Caco-2 (cell line): ENCODE measurements at regions of chr12 and their contacts with region 1.

Region 1: GRCh38 chr12:81128930-81129554 is 51.2 kb downstream of the ACSS3 start:
- DNase-seq: peak; percentile 48 to 58
- H3K4me3 ChIP-seq: no peak overlapping the region
- H3K4me3 Mint-ChIP-seq: no peak overlapping the region
- H3K27ac Mint-ChIP-seq: no peak overlapping the region
- H3K4me1 ChIP-seq: no peaks in the 10 kb centered on the region
- H3K4me1 Mint-ChIP-seq: no peaks in the 10 kb centered on the region
- H3K27me3 ChIP-seq: no peaks in the 10 kb centered on the region
- H3K27me3 Mint-ChIP-seq: no peaks in the 10 kb centered on the region
- CTCF ChIP-seq: peak; percentile 79 to 87

Region 2: DNA sequence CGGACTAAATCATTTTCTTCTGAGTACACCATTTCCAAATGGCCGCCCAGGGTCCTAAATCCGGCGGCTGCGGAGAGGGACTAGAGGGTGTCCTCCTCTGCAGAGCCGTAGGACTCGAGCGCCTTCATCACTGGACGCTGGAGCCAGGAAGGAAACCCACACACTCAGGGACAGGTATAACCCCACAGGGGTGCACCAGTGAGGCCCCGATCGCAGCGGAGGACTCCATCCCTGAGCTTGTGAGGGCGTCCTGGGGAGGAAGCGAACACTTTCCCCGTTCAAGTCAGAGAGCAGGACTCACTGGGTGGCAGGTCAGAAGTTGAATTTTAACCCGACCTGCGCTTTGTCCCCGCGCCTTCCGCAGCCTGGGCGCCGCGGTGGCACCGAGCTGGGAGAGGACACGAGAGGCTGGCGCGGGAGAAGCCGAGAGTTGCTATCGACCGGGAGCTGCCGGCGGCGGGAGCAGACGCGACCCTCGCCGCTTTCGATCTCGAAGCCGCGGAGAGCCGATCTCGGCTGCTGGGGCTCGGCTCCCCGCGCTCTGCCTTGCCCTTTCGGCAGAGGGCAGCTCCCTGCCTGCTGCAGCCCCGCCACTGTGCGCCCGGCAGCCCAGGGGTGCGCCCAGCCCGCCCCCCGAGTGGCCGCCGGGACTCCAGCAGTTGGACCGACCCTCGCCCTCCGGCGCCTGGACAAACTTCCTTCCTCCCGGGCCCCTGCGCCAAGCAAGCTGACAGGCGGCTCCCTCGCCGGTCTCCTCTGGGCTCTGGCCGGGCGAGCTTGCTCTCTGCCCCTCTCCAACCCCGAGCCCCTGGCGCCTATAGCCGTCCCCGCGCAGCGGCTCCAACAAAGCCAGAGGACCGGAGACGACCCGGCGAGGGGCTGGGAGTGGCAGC is 192.3 kb before region 1 on chr12:
- CTCF ChIA-PET with region 1: interaction called, 3 read pairs
- POLR2A ChIA-PET with region 1: no interaction called
- intact Hi-C with region 1: loop called (anchors 2 kb)
- DNase-seq: peak; percentile 42 to 58
- H3K4me3 ChIP-seq: peak overlapping the region; percentile 84
- H3K4me3 Mint-ChIP-seq: peak overlapping the region; percentile 86
- H3K27ac Mint-ChIP-seq: peak overlapping the region; percentile 69
- H3K4me1 ChIP-seq: no peaks in the 10 kb centered on the region
- H3K4me1 Mint-ChIP-seq: peaks cover 7% of the 10 kb centered on the region
- H3K27me3 ChIP-seq: no peaks in the 10 kb centered on the region
- H3K27me3 Mint-ChIP-seq: peaks cover 2% of the 10 kb centered on the region
- CTCF ChIP-seq: peak in 1 of 2 experiments; percentile 3

Region 3: DNA sequence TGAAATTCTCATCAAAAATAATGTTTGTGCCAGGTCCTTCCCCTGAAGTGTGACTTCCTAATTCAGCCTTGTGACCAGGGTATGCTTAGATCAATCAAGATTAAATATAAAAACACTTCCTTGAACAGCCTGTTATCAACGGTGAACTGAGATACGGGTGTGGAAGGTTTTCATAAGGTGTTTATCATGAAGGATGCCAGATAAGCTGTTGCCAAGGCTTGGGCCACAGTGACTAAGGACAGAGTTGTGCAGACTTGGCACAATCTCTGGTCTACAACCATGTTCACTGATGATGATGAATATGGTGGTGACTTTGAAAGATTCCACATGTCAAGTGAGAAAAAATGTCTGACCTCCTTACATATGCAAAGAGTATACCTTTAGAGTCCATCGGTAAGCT is 140.1 kb before region 1 on chr12:
- CTCF ChIA-PET with region 1: no interaction called
- POLR2A ChIA-PET with region 1: no interaction called
- intact Hi-C with region 1: loop called (anchors 5 kb)
- DNase-seq: no peak
- H3K4me3 ChIP-seq: no peak overlapping the region
- H3K4me3 Mint-ChIP-seq: no peak overlapping the region
- H3K27ac Mint-ChIP-seq: no peak overlapping the region
- H3K4me1 ChIP-seq: no peaks in the 10 kb centered on the region
- H3K4me1 Mint-ChIP-seq: no peaks in the 10 kb centered on the region
- H3K27me3 ChIP-seq: no peaks in the 10 kb centered on the region
- H3K27me3 Mint-ChIP-seq: peaks cover 3% of the 10 kb centered on the region
- CTCF ChIP-seq: no peak

Region 4: GRCh38 chr12:81005606-81006005 is 123.4 kb before region 1 on chr12:
- CTCF ChIA-PET with region 1: no interaction called
- POLR2A ChIA-PET with region 1: no interaction called
- intact Hi-C with region 1: no loop called
- DNase-seq: no peak
- H3K4me3 ChIP-seq: no peak overlapping the region
- H3K4me3 Mint-ChIP-seq: no peak overlapping the region
- H3K27ac Mint-ChIP-seq: no peak overlapping the region
- H3K4me1 ChIP-seq: no peaks in the 10 kb centered on the region
- H3K4me1 Mint-ChIP-seq: no peaks in the 10 kb centered on the region
- H3K27me3 ChIP-seq: no peaks in the 10 kb centered on the region
- H3K27me3 Mint-ChIP-seq: no peaks in the 10 kb centered on the region
- CTCF ChIP-seq: no peak

Region 5: DNA sequence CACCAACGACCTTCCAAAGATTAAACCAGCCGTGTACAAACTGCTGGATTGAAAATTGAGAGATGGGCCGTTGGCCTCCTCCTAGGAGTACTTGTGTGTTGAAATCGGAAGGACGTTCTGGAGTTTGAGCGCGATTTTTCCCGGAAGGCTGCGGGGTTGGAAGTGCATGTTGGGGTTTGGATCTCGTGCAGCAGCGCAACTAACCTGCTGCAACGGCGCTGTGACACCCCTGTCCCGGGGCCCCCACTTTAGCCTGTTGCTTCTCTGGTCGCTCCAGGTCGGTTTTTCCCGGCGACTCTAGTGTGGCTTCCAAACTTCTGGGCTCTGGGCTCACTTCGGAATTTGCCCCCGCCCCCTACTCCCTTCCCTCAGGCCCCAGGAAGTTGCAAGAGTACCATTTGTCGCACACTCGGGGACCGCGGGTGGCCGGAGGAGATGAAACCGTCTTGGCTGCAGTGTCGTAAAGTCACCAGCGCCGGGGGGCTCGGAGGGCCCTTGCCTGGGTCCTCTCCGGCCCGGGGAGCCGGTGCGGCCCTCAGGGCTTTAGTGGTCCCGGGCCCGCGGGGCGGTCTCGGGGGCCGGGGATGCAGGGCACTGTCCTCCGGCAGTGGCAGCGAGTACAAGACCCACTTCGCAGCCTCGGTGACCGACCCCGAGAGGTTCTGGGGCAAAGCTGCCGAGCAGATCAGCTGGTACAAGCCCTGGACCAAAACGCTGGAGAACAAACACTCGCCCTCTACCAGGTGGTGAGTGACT is 51.2 kb before region 1 on chr12 and contains the start of gene ACSS3:
- CTCF ChIA-PET with region 1: no interaction called
- POLR2A ChIA-PET with region 1: no interaction called
- intact Hi-C with region 1: no loop called
- DNase-seq: no peak
- H3K4me3 ChIP-seq: no peak within 1 kb of the TSS
- H3K4me3 Mint-ChIP-seq: no peak within 1 kb of the TSS
- H3K27ac Mint-ChIP-seq: no peak within 1 kb of the TSS
- H3K4me1 ChIP-seq: no peaks in the 10 kb centered on the region
- H3K4me1 Mint-ChIP-seq: peaks cover 17% of the 10 kb centered on the region
- H3K27me3 ChIP-seq: no peaks in the 10 kb centered on the region
- H3K27me3 Mint-ChIP-seq: no peaks in the 10 kb centered on the region
- CTCF ChIP-seq: no peak
- total RNA-seq, gene ACSS3: 0.70 and 0.95 TPM in 2 replicates

Region 6: GRCh38 chr12:81147292-81147919 is 18.4 kb after region 1 on chr12:
- CTCF ChIA-PET with region 1: no interaction called
- POLR2A ChIA-PET with region 1: no interaction called
- intact Hi-C with region 1: no loop called
- DNase-seq: peak; percentile 49 to 50
- H3K4me3 ChIP-seq: no peak overlapping the region
- H3K4me3 Mint-ChIP-seq: peak overlapping the region; percentile 30
- H3K27ac Mint-ChIP-seq: peak overlapping the region; percentile 65
- H3K4me1 ChIP-seq: peaks cover 45% of the 10 kb centered on the region
- H3K4me1 Mint-ChIP-seq: peaks cover 23% of the 10 kb centered on the region
- H3K27me3 ChIP-seq: no peaks in the 10 kb centered on the region
- H3K27me3 Mint-ChIP-seq: no peaks in the 10 kb centered on the region
- CTCF ChIP-seq: no peak

Region 7: GRCh38 chr12:81162391-81163136 is 33.5 kb after region 1 on chr12:
- CTCF ChIA-PET with region 1: no interaction called
- POLR2A ChIA-PET with region 1: no interaction called
- intact Hi-C with region 1: no loop called
- DNase-seq: no peak
- H3K4me3 ChIP-seq: no peak overlapping the region
- H3K4me3 Mint-ChIP-seq: no peak overlapping the region
- H3K27ac Mint-ChIP-seq: no peak overlapping the region
- H3K4me1 ChIP-seq: peaks cover 3% of the 10 kb centered on the region
- H3K4me1 Mint-ChIP-seq: peaks cover 2% of the 10 kb centered on the region
- H3K27me3 ChIP-seq: no peaks in the 10 kb centered on the region
- H3K27me3 Mint-ChIP-seq: no peaks in the 10 kb centered on the region
- CTCF ChIP-seq: no peak